ENCODE measurements at regions of chr5 and their contacts with region 1.

Region 1: GRCh38 chr5:93723005-93723404 is 18.4 kb downstream of the POU5F2 start:
- DNase-seq: no peak
- H3K4me3 ChIP-seq: no peak overlapping the region
- H3K27ac ChIP-seq: no peak overlapping the region
- H3K4me1 ChIP-seq: peaks cover 0 to 9% (median 0%) of the 10 kb centered on the region in 4 experiments; a peak in 1 of 7 replicates
- H3K27me3 ChIP-seq: no peaks in the 10 kb centered on the region
- CTCF ChIP-seq: no peak
- EP300 ChIP-seq: no peak
- POLR2A ChIP-seq: no peak
- RAD21 ChIP-seq: no peak

Region 2: DNA sequence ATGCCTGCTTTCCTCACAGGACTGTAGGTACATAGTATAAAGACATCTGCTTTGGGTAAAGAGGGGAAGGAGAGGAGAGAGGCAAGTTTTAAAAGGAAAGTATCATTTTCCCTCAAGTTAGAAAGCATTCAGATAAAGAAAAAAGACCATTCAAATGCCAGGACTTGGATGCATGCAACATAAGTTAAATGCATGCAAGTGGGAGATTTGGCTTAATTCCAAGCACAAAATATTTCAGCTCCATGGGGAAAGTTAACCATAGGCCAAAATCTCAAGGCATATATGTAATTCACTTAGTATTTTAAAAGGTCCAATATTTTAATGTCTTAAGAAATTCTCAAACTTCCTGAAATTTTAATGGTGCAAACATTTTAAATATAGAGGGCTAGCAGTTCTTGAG is 18.0 kb before region 1 on chr5:
- CTCF ChIA-PET with region 1: no interaction called
- POLR2A ChIA-PET with region 1: no interaction called
- DNase-seq: no peak
- H3K4me3 ChIP-seq: no peak overlapping the region
- H3K27ac ChIP-seq: no peak overlapping the region
- H3K4me1 ChIP-seq: no peaks in the 10 kb centered on the region
- H3K27me3 ChIP-seq: no peaks in the 10 kb centered on the region
- CTCF ChIP-seq: no peak
- EP300 ChIP-seq: no peak
- POLR2A ChIP-seq: no peak
- RAD21 ChIP-seq: no peak

Region 3: DNA sequence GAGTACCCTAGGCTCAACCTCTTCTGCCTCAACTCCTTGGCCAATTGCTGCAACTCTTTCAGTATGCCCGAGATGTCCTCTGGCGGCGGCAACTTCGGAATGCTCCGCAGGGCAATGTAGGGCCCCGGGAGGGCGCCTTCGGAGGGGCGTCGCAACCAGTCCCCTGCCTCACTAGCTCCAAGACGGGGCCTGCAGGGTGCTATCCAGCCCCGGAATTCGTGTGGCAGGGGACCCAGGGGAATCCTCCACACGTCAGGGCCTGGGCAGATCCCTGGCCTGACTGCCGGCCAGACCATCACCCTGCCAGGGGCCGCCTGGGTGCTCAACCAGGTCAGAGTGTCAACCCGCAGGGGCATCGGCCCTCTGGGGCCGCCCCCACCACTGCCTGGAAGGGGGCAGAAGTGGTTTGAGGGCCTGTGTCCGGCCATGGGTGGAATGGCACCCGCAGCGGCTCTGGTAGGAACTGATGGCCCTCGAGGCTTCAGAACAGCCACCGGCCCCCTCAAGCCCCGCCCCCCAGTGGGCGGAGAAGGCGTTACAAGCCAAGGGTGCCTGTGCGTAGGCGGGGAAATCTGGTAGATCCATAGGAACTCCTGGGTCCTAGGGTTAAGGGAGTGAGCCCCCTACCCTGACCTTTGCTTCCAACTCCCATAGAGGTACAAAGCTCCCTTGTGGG is 18.3 kb after region 1 on chr5 and contains the start of gene POU5F2:
- CTCF ChIA-PET with region 1: interaction called, 11 read pairs
- POLR2A ChIA-PET with region 1: no interaction called
- DNase-seq: peak in 1 of 2 experiments; percentile 83
- H3K4me3 ChIP-seq: no peak within 1 kb of the TSS
- H3K27ac ChIP-seq: no peak within 1 kb of the TSS
- H3K4me1 ChIP-seq: no peaks in the 10 kb centered on the region
- H3K27me3 ChIP-seq: no peaks in the 10 kb centered on the region
- CTCF ChIP-seq: peak; percentile 36 to 62 (median 61)
- EP300 ChIP-seq: no peak
- POLR2A ChIP-seq: no peak
- RAD21 ChIP-seq: peak; percentile 36 to 56
- total RNA-seq, gene POU5F2: 0.06 TPM in 2 replicates

Measured in H1 (cell line).